Aorta (tissue), 5 donors: ENCODE measurements at regions of chr5 and their contacts with region 1.

Region 1: DNA sequence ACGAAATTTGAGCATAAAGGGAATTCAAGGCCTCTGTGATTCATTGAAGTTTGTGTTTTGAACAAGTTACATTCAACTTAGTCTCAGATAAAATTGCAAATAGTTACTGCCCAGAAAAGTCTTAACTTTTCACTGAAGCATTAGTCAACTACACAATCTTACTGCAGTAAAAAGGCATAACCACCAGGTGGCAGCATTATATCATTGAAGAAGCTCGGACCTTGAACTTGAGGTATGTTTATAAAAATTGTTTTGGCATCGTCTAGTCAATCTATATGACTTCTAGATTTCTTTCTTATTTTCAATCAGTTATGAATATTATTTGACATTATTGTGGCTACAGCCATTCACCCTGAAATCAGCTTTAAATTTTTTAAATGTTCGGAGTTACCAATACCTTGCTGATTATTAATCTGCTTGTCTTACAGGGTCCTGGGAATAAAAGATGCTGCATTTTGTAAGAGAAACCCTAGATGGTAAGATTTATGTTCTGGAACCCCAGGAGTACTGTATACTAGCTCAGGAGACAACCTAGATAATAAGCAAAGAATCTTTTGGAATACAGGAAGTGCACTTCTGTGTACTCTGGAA is 83.9 kb upstream of the GRAMD2B start:
- DNase-seq: no peak
- ATAC-seq: no peak
- H3K4me3 ChIP-seq: no peak overlapping the region
- H3K27ac ChIP-seq: no peak overlapping the region
- H3K4me1 ChIP-seq: peaks cover 0 to 2% of the 10 kb centered on the region in 2 donors
- H3K27me3 ChIP-seq: no peaks in the 10 kb centered on the region

Region 2: GRCh38 chr5:126284977-126285696 is 54.2 kb before region 1 on chr5:
- intact Hi-C with region 1: no loop called
- DNase-seq: no peak
- ATAC-seq: no peak
- H3K4me3 ChIP-seq: no peak overlapping the region
- H3K27ac ChIP-seq: no peak overlapping the region
- H3K4me1 ChIP-seq: no peaks in the 10 kb centered on the region
- H3K27me3 ChIP-seq: no peaks in the 10 kb centered on the region

Region 3: DNA sequence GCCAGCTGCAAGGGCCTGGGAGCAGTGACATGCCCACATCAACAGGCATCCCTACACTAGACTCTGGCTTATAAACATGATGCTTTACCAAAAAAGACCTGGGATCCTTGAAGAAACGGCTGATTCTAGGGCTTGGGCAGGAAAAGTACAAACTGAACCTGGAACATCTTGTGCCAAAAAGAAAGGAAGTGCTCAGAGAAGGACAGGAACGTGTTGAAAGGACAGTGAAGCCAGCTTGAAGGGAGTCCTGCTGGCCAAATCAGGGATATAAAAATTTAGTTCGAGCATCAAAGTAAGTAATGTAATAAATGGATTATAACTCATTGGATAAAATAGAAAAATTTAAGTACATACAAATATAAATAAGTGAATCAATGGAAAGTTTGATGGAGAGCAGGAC is 197.6 kb after region 1 on chr5:
- intact Hi-C with region 1: loop called (anchors 2 to 5 kb)
- DNase-seq: no peak
- ATAC-seq: no peak
- H3K4me3 ChIP-seq: no peak overlapping the region
- H3K27ac ChIP-seq: no peak overlapping the region
- H3K4me1 ChIP-seq: peaks cover 0 to 2% of the 10 kb centered on the region in 2 donors
- H3K27me3 ChIP-seq: no peaks in the 10 kb centered on the region

Region 4: GRCh38 chr5:126594676-126595485 is 255.6 kb after region 1 on chr5 and contains the start of gene ALDH7A1:
- intact Hi-C with region 1: loop called (anchors 2 to 5 kb)
- DNase-seq: peak; percentile 93 to 96
- ATAC-seq: peak; percentile 96
- H3K4me3 ChIP-seq: peak within 1 kb of the TSS; percentile 39 to 55
- H3K27ac ChIP-seq: peak within 1 kb of the TSS in 1 of 2 donors; percentile 69
- H3K4me1 ChIP-seq: no peaks in the 10 kb centered on the region
- H3K27me3 ChIP-seq: no peaks in the 10 kb centered on the region
- total RNA-seq, gene ALDH7A1: 25.3 to 35.5 TPM

Region 5: GRCh38 chr5:126600631-126601511 is 261.6 kb after region 1 on chr5 and contains the start of gene PHAX:
- intact Hi-C with region 1: loop called (anchors 2 to 5 kb)
- DNase-seq: peak; percentile 82 to 91
- ATAC-seq: peak; percentile 97
- H3K4me3 ChIP-seq: peak within 1 kb of the TSS; percentile 87 to 96
- H3K27ac ChIP-seq: peak within 1 kb of the TSS in 1 of 2 donors; percentile 77
- H3K4me1 ChIP-seq: no peaks in the 10 kb centered on the region
- H3K27me3 ChIP-seq: no peaks in the 10 kb centered on the region
- total RNA-seq, gene PHAX: 30.3 to 32.0 TPM

Region 6: DNA sequence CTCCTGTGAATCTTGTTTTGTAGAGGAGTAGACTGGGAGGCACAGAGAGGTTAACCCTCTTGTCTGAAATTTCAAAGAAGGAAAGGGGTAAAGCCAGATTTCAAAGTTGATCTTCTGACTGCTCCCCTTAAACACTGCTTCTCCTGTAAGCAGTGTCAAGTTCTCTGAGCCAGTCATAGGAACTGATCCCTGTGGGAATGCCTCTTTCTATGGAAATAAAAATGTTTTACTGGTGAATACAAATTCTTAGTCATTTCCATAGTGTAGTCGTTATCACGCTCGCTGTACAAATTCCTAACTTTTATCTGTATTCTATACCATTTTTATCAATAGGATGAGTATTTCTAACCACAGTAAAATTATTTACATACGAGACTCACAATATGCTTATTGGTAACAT is 1111.8 kb after region 1 on chr5:
- intact Hi-C with region 1: no loop called
- DNase-seq: no peak
- ATAC-seq: no peak
- H3K4me3 ChIP-seq: no peak overlapping the region
- H3K27ac ChIP-seq: no peak overlapping the region
- H3K4me1 ChIP-seq: no peaks in the 10 kb centered on the region
- H3K27me3 ChIP-seq: no peaks in the 10 kb centered on the region